Activated CD8-positive, alpha-beta T cell treated with anti-CD3 and anti-CD28 coated beads for 36 hours (primary cell): ENCODE measurements at regions of chr6 and their contacts with region 1.

Region 1: DNA sequence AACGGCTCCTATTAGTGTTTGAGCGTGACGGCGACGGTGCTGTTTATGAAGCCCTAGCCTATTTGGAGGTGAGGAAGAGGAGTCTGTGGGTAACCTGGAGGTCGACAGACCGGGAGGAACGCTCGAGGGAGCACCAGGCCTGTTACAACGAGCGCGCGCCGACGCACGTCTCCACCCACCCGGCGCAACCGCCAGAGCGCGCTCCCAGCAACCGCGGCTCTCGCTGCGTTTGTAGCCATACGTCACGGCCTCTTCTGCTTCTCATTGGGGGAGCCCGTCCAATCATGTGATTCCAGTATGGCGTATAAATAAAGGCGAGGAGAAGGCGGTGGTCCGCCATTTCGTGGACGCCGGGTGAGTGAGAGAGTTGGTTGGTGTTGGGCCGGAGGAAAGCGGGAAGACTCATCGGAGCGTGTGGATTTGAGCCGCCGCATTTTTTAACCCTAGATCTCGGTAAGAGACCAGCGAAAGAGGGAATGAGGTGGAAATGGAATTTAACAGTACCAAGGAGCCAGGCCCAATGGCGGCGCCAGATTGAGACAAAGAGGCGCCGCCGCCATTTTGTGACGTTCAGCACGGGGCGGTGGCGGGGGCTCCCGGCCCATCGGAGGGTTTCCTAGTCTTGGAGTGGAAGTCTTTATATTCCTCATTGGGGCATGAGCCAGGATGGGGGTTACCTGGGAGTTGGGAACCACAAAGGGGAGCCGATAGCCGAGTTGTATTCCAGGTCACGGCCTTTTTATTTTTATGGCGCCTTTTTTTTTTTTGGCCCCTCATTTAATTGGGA is at the start of gene SRSF3:
- DNase-seq: peak; percentile 97
- ATAC-seq: peak; percentile 89
- H3K4me3 Mint-ChIP-seq: peak within 1 kb of the TSS; percentile 86
- H3K27ac Mint-ChIP-seq: peak within 1 kb of the TSS; percentile 96
- H3K4me1 Mint-ChIP-seq: peaks cover 21% of the 10 kb centered on the region
- H3K27me3 Mint-ChIP-seq: no peaks in the 10 kb centered on the region
- CTCF ChIP-seq: no peak
- total RNA-seq, gene SRSF3: 402 to 404 TPM

Region 2: DNA sequence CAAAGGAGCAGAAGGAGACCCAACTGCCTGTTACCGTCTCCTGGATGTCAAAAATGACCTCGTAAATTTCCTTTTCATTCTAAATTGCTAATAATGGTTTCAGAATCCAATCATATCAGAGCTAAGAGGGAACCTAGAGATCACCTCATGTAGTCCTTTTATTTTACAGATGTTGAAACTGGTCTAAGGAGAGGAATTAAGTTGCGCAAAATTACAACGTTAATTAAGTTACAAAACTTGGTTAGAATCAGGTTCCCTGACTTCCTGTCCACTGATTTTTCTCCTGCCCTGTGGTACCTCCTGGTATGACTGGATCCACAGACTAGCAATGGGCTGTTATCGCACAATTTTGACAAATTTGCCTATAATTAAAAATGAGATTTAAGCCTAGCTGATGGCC is 37.9 kb before region 1 on chr6:
- CTCF ChIA-PET with region 1: no interaction called
- POLR2A ChIA-PET with region 1: no interaction called
- intact Hi-C with region 1: no loop called
- DNase-seq: no peak
- ATAC-seq: no peak
- H3K4me3 Mint-ChIP-seq: no peak overlapping the region
- H3K27ac Mint-ChIP-seq: no peak overlapping the region
- H3K4me1 Mint-ChIP-seq: peaks cover 3% of the 10 kb centered on the region
- H3K27me3 Mint-ChIP-seq: no peaks in the 10 kb centered on the region
- CTCF ChIP-seq: no peak

Region 3: GRCh38 chr6:36580184-36580526 is 14.1 kb before region 1 on chr6:
- CTCF ChIA-PET with region 1: interaction called, 3 read pairs
- POLR2A ChIA-PET with region 1: interaction called, 10 read pairs
- intact Hi-C with region 1: no loop called
- DNase-seq: no peak
- ATAC-seq: no peak
- H3K4me3 Mint-ChIP-seq: no peak overlapping the region
- H3K27ac Mint-ChIP-seq: no peak overlapping the region
- H3K4me1 Mint-ChIP-seq: peaks cover 4% of the 10 kb centered on the region
- H3K27me3 Mint-ChIP-seq: no peaks in the 10 kb centered on the region
- CTCF ChIP-seq: no peak

Region 4: DNA sequence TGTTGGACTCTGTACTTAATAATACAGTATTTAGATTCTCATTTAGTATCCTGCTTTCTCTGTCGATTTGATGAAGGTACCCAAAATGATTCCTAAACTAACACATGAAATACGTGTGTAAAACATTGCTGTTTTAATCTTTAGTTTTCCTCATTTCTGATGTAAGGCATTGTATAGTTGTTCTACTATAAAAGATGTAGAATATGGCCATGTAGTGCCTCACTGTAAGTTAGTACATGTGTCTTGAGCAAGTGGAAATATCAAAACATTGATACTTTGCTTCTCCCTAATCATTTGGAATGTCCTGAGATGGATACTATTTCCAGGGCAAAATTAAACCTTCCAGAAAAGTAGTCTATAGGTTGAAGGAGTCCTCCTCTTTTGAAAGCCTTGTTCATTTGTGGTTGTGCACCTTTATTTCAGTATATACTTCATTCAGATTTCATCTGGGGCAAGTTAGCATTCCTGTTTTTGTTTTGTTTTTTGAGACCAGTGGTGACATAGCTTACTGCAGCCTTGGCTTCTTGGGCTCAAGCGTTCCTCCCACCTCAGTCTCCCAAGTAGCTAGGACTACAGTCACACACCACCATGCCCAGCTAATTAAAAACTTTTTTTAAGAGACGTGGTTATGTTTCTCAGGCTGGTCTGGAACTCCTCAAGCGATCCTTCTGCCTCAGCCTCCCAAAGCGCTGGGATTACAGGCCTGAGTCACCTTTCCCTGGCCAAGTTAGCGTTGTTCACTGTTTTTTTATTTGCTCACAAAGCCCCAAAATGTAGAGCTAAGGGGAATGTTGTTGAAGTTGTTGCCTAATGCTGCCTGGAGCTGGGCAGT is 11.6 kb after region 1 on chr6:
- CTCF ChIA-PET with region 1: interaction called, 16 read pairs
- POLR2A ChIA-PET with region 1: interaction called, 139 read pairs
- intact Hi-C with region 1: no loop called
- DNase-seq: no peak
- ATAC-seq: no peak
- H3K4me3 Mint-ChIP-seq: no peak overlapping the region
- H3K27ac Mint-ChIP-seq: peak overlapping the region; percentile 70
- H3K4me1 Mint-ChIP-seq: peaks cover 70% of the 10 kb centered on the region
- H3K27me3 Mint-ChIP-seq: no peaks in the 10 kb centered on the region
- CTCF ChIP-seq: no peak